Aorta (tissue), 5 donors: ENCODE measurements at regions of chr2 and their contacts with region 1.

Region 1: DNA sequence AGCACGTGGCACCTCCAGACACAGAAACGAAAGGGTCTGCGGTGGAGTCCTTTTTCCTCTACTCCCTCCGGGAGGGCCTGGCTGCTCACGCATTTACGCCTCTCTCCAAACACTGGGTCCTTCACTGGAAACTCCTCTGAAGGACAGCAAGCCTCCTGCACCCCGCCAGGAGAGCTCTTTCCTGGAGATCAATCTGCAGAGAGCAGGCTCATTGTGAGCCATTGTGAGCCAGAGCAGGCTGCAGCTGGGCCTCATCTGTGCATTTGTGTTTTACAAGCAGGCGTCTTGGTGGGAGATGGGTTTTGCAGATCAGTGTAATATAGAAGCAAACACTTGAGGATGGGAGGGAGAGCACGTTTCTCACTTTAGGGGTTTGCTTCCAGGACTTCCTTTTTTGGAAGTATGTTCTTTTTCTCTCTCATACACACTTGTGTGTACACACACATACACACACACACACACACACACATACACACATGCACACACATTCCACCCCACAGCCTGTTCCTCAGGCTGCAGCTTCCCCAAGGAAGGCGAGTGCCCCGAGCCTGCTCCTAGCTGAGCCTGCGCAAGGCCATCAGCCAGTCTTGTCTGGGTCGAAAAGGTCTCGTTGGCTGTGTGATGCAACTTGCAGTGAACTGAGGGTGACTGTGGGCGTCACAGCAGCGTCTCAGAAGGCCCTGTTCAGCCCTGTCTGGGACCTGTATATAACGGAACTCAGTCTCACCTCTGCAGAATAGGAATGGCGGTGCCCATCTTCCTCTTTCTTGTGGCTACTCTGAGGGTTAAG is 163.5 kb downstream of the GLI2 start:
- DNase-seq: peak in 1 of 2 donors; percentile 45
- ATAC-seq: no peak
- H3K4me3 ChIP-seq: no peak overlapping the region
- H3K27ac ChIP-seq: no peak overlapping the region
- H3K4me1 ChIP-seq: no peaks in the 10 kb centered on the region
- H3K27me3 ChIP-seq: no peaks in the 10 kb centered on the region

Region 2: DNA sequence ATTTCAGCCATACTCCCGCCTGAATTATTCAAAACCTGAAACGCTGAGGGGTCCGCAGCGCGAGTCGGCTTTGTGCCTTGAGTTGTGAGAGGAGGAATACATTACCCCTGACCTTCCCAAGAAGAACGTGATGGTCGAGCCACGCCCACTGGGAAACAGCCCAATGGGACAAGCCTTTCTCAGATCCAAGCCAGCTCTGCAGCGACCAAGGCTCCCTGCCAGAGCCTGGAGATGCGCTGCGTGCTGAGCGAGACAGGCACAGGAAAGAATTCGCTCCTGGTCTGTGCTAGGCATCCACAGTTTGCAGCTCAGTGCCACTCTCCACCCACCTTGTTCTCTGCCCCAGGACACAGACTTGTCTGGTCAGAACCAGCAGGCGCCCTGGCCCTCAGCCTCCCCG is 237.6 kb before region 1 on chr2:
- intact Hi-C with region 1: no loop called
- DNase-seq: no peak
- ATAC-seq: peak; percentile 52
- H3K4me3 ChIP-seq: no peak overlapping the region
- H3K27ac ChIP-seq: no peak overlapping the region
- H3K4me1 ChIP-seq: peaks cover 0 to 2% of the 10 kb centered on the region in 2 donors
- H3K27me3 ChIP-seq: no peaks in the 10 kb centered on the region

Region 3: GRCh38 chr2:120934574-120935340 is 35.6 kb after region 1 on chr2:
- intact Hi-C with region 1: loop called in 1 of 2 experiments (anchors 5 kb)
- DNase-seq: no peak
- ATAC-seq: peak; percentile 49
- H3K4me3 ChIP-seq: no peak overlapping the region
- H3K27ac ChIP-seq: peak overlapping the region in 1 of 2 donors; percentile 13
- H3K4me1 ChIP-seq: peaks cover 0 to 2% of the 10 kb centered on the region in 2 donors
- H3K27me3 ChIP-seq: no peaks in the 10 kb centered on the region